Caco-2 (cell line): ENCODE measurements at regions of chr13 and their contacts with region 1.

Region 1: DNA sequence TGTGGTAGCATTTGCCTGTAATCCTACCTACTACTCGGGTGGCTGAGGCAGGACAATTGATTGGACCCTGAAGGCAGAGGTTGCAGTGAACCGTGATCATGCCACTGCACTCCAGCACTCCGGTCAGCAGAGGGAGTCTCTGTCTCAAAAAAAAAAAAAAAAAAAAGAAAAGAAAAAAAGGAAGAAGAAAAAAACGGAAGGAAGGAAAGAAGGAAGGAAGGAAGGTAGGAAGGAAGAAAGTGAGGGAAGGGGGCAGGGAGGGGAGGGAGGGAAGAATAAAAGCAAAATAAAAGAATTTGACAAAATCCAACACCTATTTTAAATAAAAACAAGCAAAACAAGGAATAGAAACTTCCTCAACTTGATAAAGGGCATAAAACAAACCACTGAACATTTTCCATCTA is 411.6 kb upstream of the SLITRK5 start:
- DNase-seq: peak in 1 of 2 experiments; percentile 41
- H3K4me3 ChIP-seq: no peak overlapping the region
- H3K4me3 Mint-ChIP-seq: no peak overlapping the region
- H3K27ac Mint-ChIP-seq: no peak overlapping the region
- H3K4me1 ChIP-seq: no peaks in the 10 kb centered on the region
- H3K4me1 Mint-ChIP-seq: peaks cover 7% of the 10 kb centered on the region
- H3K27me3 ChIP-seq: no peaks in the 10 kb centered on the region
- H3K27me3 Mint-ChIP-seq: peaks cover 3% of the 10 kb centered on the region
- CTCF ChIP-seq: peak; percentile 41 to 55

Region 2: DNA sequence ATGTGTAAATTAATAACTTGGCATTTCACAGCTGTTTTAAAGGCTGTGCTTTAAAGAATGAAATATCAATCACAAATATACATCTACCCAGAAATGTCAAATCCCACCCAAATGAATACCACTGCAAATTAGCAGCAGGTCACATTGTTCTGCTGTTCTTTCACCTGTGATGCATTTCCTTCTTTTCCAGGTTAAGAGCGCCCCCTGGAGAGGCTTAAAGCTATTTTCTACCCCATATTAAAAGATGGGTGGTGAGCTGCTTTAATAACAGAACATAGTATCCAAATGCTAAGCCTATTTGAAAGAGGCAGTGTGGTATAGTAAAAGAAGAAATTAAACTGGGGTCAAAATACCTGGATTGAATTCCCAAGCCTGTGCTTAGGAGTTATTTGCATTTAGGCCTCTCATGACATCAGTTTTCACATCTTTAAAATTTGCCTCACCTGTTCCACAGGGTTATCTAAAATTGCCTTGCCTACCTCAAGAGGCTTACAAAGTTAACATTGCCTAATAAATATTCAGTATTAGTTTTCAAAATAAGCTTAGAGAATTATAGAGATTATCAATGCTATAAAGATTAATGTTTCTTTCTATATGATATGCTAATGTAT is 14.8 kb after region 1 on chr13:
- CTCF ChIA-PET with region 1: no interaction called
- POLR2A ChIA-PET with region 1: no interaction called
- intact Hi-C with region 1: loop called (anchors 1 kb)
- DNase-seq: peak; percentile 45 to 64
- H3K4me3 ChIP-seq: no peak overlapping the region
- H3K4me3 Mint-ChIP-seq: no peak overlapping the region
- H3K27ac Mint-ChIP-seq: no peak overlapping the region
- H3K4me1 ChIP-seq: no peaks in the 10 kb centered on the region
- H3K4me1 Mint-ChIP-seq: no peaks in the 10 kb centered on the region
- H3K27me3 ChIP-seq: no peaks in the 10 kb centered on the region
- H3K27me3 Mint-ChIP-seq: peaks cover 4% of the 10 kb centered on the region
- CTCF ChIP-seq: peak; percentile 65 to 78